ENCODE measurements at regions of chr6 and their contacts with region 1.

Region 1: DNA sequence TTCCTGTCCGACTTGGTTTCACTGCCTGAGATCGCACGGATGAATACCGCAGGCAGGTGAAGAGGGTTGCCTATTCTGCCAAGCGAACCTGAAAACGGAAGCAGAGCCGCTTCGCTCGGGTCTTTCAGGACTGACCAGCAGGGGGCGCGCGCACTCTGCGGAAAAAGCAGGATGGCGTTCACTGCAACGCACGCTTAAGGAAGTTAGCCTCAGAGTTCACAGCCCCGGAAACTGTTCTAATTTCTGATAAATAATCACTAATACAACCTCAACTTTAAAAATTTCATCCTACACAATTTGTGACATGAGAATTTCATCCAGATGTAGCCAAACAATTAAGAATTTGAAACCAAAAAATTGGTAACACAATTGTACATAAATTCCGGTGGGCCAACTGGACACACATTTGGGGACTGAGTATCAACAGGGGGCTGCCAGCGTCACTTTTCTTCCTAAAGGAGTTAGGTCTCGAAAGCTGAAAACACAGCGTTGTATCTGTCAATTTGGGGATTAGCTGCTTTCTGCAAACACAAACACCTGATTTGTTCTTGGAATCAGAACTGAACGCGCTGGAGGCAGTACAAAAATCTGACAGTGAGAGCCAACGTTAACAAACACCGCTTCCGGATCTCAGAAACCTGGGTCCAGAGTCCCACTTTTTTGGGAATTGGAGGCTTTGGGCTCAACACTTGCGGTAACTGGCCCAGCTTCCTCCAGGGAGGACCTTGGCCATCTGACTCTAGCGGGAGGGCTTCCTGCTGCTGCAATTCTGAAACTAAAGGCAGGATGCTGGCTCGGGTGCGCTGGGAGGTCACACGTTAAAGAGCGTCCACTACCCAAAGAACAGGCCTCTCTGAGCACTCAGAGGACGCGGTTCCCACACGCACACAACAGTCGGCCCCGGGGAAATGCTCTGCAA is 8.8 kb downstream of the PXDC1 start:
- DNase-seq: peak; percentile 73 to 88
- H3K4me3 ChIP-seq: no peak overlapping the region
- H3K4me3 Mint-ChIP-seq: no peak overlapping the region
- H3K27ac Mint-ChIP-seq: peak overlapping the region; percentile 16
- H3K4me1 ChIP-seq: peaks cover 14% of the 10 kb centered on the region
- H3K4me1 Mint-ChIP-seq: peaks cover 14% of the 10 kb centered on the region
- H3K27me3 ChIP-seq: no peaks in the 10 kb centered on the region
- H3K27me3 Mint-ChIP-seq: no peaks in the 10 kb centered on the region
- CTCF ChIP-seq: peak; percentile 90 to 91

Region 2: DNA sequence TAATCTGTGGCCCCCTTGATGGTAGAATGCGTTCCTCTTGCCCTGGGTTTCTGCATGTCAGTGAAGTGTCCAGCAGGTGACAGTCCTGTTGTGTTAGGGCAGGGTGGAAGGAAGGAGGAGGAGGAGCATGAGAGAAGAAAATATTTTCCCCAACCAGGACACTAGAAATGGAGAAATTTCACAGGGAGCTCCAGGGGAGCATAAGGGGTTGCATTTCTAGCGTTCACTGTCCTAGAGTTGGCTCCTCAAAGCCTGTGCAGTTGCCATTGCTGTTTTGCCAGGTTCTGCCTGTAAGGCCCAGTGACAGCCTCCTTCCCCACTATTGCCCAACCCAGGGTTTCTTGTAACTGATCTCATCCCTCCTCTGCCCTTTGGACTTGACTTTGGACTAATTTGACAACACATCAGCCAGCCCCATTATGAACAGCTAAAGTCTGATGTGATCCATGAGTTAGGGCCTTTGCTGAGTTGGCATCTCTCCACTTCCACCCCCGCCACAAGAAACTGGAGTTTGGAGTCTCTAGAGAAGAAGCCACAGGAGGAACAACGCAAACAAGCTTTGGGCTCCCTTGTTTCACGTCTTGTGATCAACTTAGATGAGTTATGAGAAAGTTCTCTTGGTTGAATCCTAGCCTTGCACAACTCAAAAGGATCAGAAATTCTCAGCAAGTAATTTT is 92.5 kb after region 1 on chr6:
- CTCF ChIA-PET with region 1: no interaction called
- POLR2A ChIA-PET with region 1: no interaction called
- intact Hi-C with region 1: loop called (anchors 1 kb)
- DNase-seq: peak; percentile 62
- H3K4me3 ChIP-seq: no peak overlapping the region
- H3K4me3 Mint-ChIP-seq: no peak overlapping the region
- H3K27ac Mint-ChIP-seq: no peak overlapping the region
- H3K4me1 ChIP-seq: peaks cover 11% of the 10 kb centered on the region
- H3K4me1 Mint-ChIP-seq: peaks cover 7% of the 10 kb centered on the region
- H3K27me3 ChIP-seq: no peaks in the 10 kb centered on the region
- H3K27me3 Mint-ChIP-seq: no peaks in the 10 kb centered on the region
- CTCF ChIP-seq: peak; percentile 65 to 73

Region 3: GRCh38 chr6:3929281-3929798 is 186.7 kb after region 1 on chr6:
- CTCF ChIA-PET with region 1: interaction called, 7 read pairs
- POLR2A ChIA-PET with region 1: no interaction called
- intact Hi-C with region 1: loop called (anchors 1 kb)
- DNase-seq: no peak
- H3K4me3 ChIP-seq: no peak overlapping the region
- H3K4me3 Mint-ChIP-seq: no peak overlapping the region
- H3K27ac Mint-ChIP-seq: no peak overlapping the region
- H3K4me1 ChIP-seq: no peaks in the 10 kb centered on the region
- H3K4me1 Mint-ChIP-seq: no peaks in the 10 kb centered on the region
- H3K27me3 ChIP-seq: no peaks in the 10 kb centered on the region
- H3K27me3 Mint-ChIP-seq: no peaks in the 10 kb centered on the region
- CTCF ChIP-seq: no peak

Region 4: GRCh38 chr6:3990692-3991501 is 248.2 kb after region 1 on chr6:
- CTCF ChIA-PET with region 1: no interaction called
- POLR2A ChIA-PET with region 1: interaction called, 3 read pairs
- intact Hi-C with region 1: loop called (anchors 2 kb)
- DNase-seq: peak; percentile 74 to 85
- H3K4me3 ChIP-seq: no peak overlapping the region
- H3K4me3 Mint-ChIP-seq: peak overlapping the region; percentile 52
- H3K27ac Mint-ChIP-seq: no peak overlapping the region
- H3K4me1 ChIP-seq: peaks cover 14% of the 10 kb centered on the region
- H3K4me1 Mint-ChIP-seq: peaks cover 11% of the 10 kb centered on the region
- H3K27me3 ChIP-seq: no peaks in the 10 kb centered on the region
- H3K27me3 Mint-ChIP-seq: no peaks in the 10 kb centered on the region
- CTCF ChIP-seq: peak; percentile 89 to 94

Region 5: GRCh38 chr6:4039348-4039747 is 296.7 kb after region 1 on chr6:
- CTCF ChIA-PET with region 1: no interaction called
- POLR2A ChIA-PET with region 1: no interaction called
- intact Hi-C with region 1: no loop called
- DNase-seq: no peak
- H3K4me3 ChIP-seq: no peak overlapping the region
- H3K4me3 Mint-ChIP-seq: no peak overlapping the region
- H3K27ac Mint-ChIP-seq: no peak overlapping the region
- H3K4me1 ChIP-seq: no peaks in the 10 kb centered on the region
- H3K4me1 Mint-ChIP-seq: peaks cover 8% of the 10 kb centered on the region
- H3K27me3 ChIP-seq: no peaks in the 10 kb centered on the region
- H3K27me3 Mint-ChIP-seq: no peaks in the 10 kb centered on the region
- CTCF ChIP-seq: no peak